ENCODE measurements at regions of chr6 and their contacts with region 1.

Region 1: GRCh38 chr6:29016559-29017427 is 11.7 kb upstream of the ZNF311 start:
- DNase-seq: peak; percentile 56 to 87 (median 70)
- ATAC-seq: peak; percentile 92 to 98 (median 96)
- H3K4me3 ChIP-seq: peak overlapping the region in 3 of 4 donors; percentile 13 to 44 (median 26)
- H3K27ac ChIP-seq: no peak overlapping the region
- H3K4me1 ChIP-seq: no peaks in the 10 kb centered on the region
- H3K27me3 ChIP-seq: peaks cover 0 to 14% (median 0%) of the 10 kb centered on the region in 4 donors
- CTCF ChIP-seq: peak; percentile 55 to 88 (median 78)

Region 2: DNA sequence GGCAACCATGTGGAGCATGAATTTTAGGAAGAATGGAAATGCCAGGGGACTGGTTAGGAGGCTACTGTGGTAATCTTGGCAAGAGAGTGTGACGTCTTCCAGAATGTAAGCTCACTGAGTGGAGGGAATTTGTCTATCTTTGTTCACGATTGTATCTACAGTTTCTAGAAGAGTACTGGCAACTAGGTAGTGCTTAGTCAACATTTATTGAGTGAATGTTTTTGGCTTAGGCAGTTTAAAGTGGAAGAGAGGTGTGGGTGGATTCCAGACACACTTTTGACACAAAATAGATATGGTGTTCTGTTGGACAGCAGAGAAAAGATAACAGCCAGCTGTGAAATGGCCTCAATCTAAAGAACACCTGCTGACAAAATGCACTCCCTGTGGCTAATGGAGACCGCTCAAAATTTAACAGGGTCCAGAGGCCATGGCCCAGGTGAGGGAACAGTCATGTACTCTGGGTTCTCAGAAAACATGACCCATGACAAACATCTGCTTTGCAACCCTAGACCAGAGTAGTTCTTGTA is 351.9 kb before region 1 on chr6:
- intact Hi-C with region 1: loop called in 1 of 3 experiments (anchors 10 kb)
- DNase-seq: no peak
- ATAC-seq: no peak
- H3K4me3 ChIP-seq: no peak overlapping the region
- H3K27ac ChIP-seq: no peak overlapping the region
- H3K4me1 ChIP-seq: no peaks in the 10 kb centered on the region
- H3K27me3 ChIP-seq: peaks cover 0 to 25% (median 2%) of the 10 kb centered on the region in 4 donors
- CTCF ChIP-seq: no peak

Region 3: DNA sequence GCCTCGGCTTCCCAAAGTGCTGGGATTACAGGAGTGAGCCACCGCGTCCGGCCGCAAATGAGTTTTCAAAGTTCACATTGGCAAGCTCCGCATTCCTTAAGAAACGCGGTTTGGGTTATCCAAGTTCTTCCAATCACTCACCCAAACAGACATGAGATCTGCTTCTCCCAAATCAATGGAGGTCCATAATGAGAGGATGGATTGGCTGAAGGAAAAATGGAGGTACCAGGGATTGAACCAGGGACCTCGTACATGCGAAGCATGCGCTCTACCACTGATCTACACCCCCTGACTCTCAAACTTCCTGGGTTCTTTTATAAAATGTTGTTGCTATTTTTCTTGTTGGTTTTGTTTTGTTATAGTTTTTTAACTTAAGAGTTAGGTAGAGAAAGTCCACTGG is 321.1 kb before region 1 on chr6:
- intact Hi-C with region 1: loop called in 1 of 3 experiments (anchors 10 kb)
- DNase-seq: no peak
- ATAC-seq: no peak
- H3K4me3 ChIP-seq: no peak overlapping the region
- H3K27ac ChIP-seq: no peak overlapping the region
- H3K4me1 ChIP-seq: no peaks in the 10 kb centered on the region
- H3K27me3 ChIP-seq: peaks cover 0 to 42% (median 2%) of the 10 kb centered on the region in 4 donors
- CTCF ChIP-seq: no peak

Region 4: GRCh38 chr6:28838634-28839442 is 178.0 kb before region 1 on chr6:
- intact Hi-C with region 1: loop called in 2 of 3 experiments (anchors 5 to 10 kb)
- DNase-seq: peak; percentile 58 to 87 (median 78)
- ATAC-seq: peak; percentile 74 to 86 (median 82)
- H3K4me3 ChIP-seq: peak overlapping the region; percentile 27 to 58 (median 48)
- H3K27ac ChIP-seq: peak overlapping the region in 3 of 4 donors; percentile 29 to 68 (median 53)
- H3K4me1 ChIP-seq: peaks cover 0 to 7% (median 0%) of the 10 kb centered on the region in 3 donors
- H3K27me3 ChIP-seq: peaks cover 0 to 20% (median 3%) of the 10 kb centered on the region in 4 donors
- CTCF ChIP-seq: peak in 3 of 4 donors; percentile 10 to 26 (median 23)